Caco-2 (cell line): ENCODE measurements at regions of chrX and their contacts with region 1.

Region 1: DNA sequence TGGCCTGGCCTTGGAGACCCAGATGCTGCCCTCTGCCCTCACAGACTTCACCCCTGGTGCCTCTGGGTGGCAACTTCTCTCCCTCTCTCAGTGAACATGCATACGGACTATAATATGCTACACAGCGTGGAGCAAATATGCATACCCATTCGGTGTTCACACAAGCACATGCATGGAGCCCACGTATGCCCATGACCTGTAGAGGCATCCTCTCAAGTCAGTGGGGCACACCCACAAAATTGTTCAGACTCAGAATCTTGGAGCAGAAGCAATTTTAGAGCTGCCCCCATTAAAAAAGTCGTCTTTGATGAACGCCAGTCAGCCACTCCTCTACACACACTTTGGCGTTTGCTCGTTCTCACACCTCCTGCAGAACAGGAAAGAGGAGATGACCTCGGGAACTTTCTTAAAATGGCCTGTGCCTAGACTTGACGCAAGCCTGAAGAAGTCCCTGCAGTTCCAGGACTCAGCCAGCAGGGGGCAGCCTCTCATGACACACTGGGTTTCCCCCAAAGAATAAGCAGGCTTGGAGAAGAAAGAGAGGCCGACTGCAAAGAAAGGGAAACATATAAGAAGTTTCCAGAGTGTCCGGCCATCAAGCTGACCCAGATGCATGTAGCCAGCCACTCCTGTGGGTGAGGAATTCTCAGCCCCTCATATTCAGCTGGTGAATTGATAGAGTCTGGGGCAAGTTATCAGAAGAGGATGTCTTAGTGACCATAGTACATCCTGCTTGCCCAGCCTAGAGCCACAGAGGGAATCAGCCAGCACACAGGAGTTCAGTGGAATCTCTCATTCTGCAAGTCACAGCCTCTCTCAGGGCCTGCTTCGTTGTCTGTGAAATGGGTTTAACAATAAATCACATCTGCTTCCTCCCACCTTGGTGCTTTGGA is 17.3 kb downstream of the APLN start:
- DNase-seq: peak; percentile 51 to 57
- H3K4me3 ChIP-seq: no peak overlapping the region
- H3K4me3 Mint-ChIP-seq: no peak overlapping the region
- H3K27ac Mint-ChIP-seq: no peak overlapping the region
- H3K4me1 ChIP-seq: no peaks in the 10 kb centered on the region
- H3K4me1 Mint-ChIP-seq: no peaks in the 10 kb centered on the region
- H3K27me3 ChIP-seq: no peaks in the 10 kb centered on the region
- H3K27me3 Mint-ChIP-seq: no peaks in the 10 kb centered on the region
- CTCF ChIP-seq: peak; percentile 74 to 85

Region 2: GRCh38 chrX:129472116-129472515 is 165.3 kb before region 1 on chrX:
- CTCF ChIA-PET with region 1: no interaction called
- POLR2A ChIA-PET with region 1: no interaction called
- intact Hi-C with region 1: no loop called
- DNase-seq: no peak
- H3K4me3 ChIP-seq: no peak overlapping the region
- H3K4me3 Mint-ChIP-seq: no peak overlapping the region
- H3K27ac Mint-ChIP-seq: no peak overlapping the region
- H3K4me1 ChIP-seq: no peaks in the 10 kb centered on the region
- H3K4me1 Mint-ChIP-seq: no peaks in the 10 kb centered on the region
- H3K27me3 ChIP-seq: no peaks in the 10 kb centered on the region
- H3K27me3 Mint-ChIP-seq: no peaks in the 10 kb centered on the region
- CTCF ChIP-seq: no peak

Region 3: GRCh38 chrX:129726307-129727111 is 89.0 kb after region 1 on chrX:
- CTCF ChIA-PET with region 1: interaction called, 15 read pairs
- POLR2A ChIA-PET with region 1: no interaction called
- intact Hi-C with region 1: loop called (anchors 1 kb)
- DNase-seq: peak; percentile 55 to 75
- H3K4me3 ChIP-seq: no peak overlapping the region
- H3K4me3 Mint-ChIP-seq: no peak overlapping the region
- H3K27ac Mint-ChIP-seq: no peak overlapping the region
- H3K4me1 ChIP-seq: no peaks in the 10 kb centered on the region
- H3K4me1 Mint-ChIP-seq: peaks cover 6% of the 10 kb centered on the region
- H3K27me3 ChIP-seq: no peaks in the 10 kb centered on the region
- H3K27me3 Mint-ChIP-seq: peaks cover 3% of the 10 kb centered on the region
- CTCF ChIP-seq: peak; percentile 55 to 77

Region 4: GRCh38 chrX:129823115-129823514 is 185.7 kb after region 1 on chrX:
- CTCF ChIA-PET with region 1: no interaction called
- POLR2A ChIA-PET with region 1: no interaction called
- intact Hi-C with region 1: loop called (anchors 10 kb)
- DNase-seq: peak; percentile 32 to 45
- H3K4me3 ChIP-seq: no peak overlapping the region
- H3K4me3 Mint-ChIP-seq: no peak overlapping the region
- H3K27ac Mint-ChIP-seq: no peak overlapping the region
- H3K4me1 ChIP-seq: no peaks in the 10 kb centered on the region
- H3K4me1 Mint-ChIP-seq: peaks cover 6% of the 10 kb centered on the region
- H3K27me3 ChIP-seq: no peaks in the 10 kb centered on the region
- H3K27me3 Mint-ChIP-seq: no peaks in the 10 kb centered on the region
- CTCF ChIP-seq: peak; percentile 41 to 54